Left cardiac atrium (tissue), 4 donors: ENCODE measurements at regions of chr9 and their contacts with region 1.

Region 1: DNA sequence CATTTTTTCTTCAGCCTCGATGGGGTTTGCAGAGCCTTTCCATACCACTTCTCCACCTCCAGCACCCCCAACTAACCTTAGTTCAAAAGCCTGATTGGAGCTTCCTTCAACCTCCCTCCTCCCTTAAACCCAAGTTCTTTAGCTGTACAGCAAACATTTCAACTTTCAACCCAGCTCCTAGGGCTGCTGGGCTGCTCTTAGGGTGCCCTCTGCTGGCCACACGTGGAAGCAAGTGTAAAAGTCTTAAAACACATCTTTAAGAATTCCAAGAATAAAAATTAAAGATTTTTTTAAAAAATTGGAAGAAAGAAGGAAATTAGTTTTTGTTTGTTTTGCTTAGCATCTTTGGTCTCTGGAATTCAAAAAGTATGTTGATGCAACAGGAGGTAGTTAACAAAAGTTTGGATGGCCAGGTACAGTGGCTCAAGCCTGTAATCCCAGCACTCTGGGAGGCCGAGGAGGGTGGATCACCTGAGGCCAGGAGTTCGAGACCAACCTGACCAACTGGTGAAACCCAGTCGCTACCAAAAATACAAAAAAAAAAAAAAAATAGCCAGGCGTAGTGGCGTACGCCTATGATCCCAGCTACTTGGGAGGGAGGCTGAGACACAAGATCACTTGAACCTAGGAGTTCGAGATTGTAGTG is 15.5 kb upstream of the HSD17B3 start:
- DNase-seq: peak; percentile 27
- ATAC-seq: peak; percentile 59 to 70

Region 2: DNA sequence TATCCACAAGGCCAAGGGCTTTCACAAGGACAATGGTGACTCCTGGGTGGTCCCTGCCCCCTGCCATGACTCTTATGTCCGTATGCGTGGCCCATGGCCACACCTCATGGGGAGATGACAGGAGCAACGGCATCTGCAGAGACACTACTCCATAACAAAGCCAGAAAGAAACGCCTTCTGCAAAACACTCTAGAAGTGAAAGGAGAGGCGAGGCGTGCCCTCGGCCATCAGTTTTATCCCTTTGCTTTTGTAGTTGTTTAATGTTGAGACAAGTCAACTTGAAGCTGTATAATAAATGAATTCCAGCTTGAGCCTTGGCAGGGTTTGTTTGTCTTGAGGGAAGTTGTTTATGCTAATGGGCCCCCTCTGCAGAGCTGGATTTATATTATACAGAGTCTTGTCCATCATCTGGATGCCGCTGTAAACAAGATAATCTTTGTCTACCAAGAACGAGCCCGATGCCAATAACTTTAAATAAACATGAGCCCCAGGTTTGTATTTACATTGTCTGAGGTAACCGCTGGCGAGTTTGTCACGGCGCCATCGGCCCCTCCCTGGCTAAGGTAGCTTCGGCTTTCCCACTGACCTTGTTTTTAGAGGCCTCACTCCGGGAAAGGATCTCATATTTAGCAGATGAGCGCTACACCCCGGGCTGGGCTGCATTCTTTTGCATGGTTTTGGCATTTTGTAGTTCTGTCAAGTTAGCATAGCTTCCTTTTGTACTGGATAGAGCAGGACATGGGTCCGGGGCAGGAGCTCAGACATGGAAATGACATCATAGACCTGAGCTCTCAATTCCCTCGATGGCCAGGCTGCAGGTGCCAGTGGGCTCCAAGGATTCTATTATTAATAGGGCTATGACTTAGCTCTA is 276.6 kb before region 1 on chr9:
- intact Hi-C with region 1: no loop called
- DNase-seq: no peak
- ATAC-seq: no peak

Region 3: GRCh38 chr9:96232539-96233241 is 84.8 kb before region 1 on chr9:
- intact Hi-C with region 1: loop called in 1 of 2 experiments (anchors 2 kb)
- DNase-seq: peak; percentile 70
- ATAC-seq: peak; percentile 84